SK-N-SH (cell line): ENCODE measurements at regions of chr17 and their contacts with region 1.

Region 1: DNA sequence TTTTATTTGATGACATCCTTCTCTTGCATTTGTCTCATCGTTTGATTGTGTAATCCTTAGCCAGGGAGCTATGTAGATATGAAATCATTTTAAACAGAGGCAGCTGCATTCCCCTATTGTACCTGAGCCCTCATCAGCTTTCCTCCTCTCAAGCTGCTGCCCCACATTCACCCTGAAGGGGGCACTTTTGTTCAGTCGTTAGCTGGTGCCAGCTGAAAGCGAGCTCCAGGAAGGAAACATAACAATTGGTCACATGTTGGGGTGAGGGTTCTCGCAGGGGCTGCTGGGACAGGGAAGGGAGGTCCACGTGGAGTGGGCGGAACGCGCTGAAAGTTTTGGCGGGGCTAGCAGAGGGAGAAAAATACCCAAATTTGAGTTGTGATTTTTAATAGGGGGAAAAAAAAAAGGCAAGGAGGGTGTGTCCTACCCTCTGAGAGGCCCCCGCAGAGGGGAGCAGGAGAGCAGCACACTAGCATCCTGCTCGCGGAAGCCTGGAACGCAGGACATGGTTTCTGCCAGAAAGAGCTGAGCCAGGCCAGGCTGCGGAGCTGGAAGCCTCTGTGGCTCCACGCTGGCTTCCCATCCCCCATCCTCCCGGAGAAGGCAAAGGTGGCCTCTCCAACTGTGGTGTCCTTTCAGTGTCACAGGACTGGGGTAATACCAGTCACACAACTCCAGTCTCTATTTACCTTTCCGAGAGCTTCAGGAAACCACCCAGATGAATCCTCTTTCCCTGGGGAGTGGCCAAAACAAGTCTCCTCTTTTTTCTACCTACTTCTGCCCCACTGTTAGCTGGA is 8.5 kb upstream of the MSL1 start:
- DNase-seq: peak; percentile 90
- H3K4me3 ChIP-seq: peak overlapping the region; percentile 44 to 48
- H3K27ac ChIP-seq: peak overlapping the region; percentile 82 to 86
- H3K4me1 ChIP-seq: peaks cover 37 to 41% of the 10 kb centered on the region in 2 experiments
- H3K27me3 ChIP-seq: no peaks in the 10 kb centered on the region
- CTCF ChIP-seq: peak; percentile 84
- EP300 ChIP-seq: 0 out of 4 replicates have a peak, but pooled peaks of 1 of the 2 experiments have one; percentile 21
- RAD21 ChIP-seq: peak; percentile 88

Region 2: GRCh38 chr17:40026816-40027613 is 86.3 kb before region 1 on chr17:
- CTCF ChIA-PET with region 1: interaction called, 44 read pairs
- POLR2A ChIA-PET with region 1: no interaction called
- DNase-seq: peak; percentile 93
- H3K4me3 ChIP-seq: no peak overlapping the region
- H3K27ac ChIP-seq: no peak overlapping the region
- H3K4me1 ChIP-seq: no peaks in the 10 kb centered on the region; a peak in 1 of 4 replicates
- H3K27me3 ChIP-seq: no peaks in the 10 kb centered on the region
- CTCF ChIP-seq: peak; percentile 89
- EP300 ChIP-seq: no peak
- RAD21 ChIP-seq: peak; percentile 62

Region 3: DNA sequence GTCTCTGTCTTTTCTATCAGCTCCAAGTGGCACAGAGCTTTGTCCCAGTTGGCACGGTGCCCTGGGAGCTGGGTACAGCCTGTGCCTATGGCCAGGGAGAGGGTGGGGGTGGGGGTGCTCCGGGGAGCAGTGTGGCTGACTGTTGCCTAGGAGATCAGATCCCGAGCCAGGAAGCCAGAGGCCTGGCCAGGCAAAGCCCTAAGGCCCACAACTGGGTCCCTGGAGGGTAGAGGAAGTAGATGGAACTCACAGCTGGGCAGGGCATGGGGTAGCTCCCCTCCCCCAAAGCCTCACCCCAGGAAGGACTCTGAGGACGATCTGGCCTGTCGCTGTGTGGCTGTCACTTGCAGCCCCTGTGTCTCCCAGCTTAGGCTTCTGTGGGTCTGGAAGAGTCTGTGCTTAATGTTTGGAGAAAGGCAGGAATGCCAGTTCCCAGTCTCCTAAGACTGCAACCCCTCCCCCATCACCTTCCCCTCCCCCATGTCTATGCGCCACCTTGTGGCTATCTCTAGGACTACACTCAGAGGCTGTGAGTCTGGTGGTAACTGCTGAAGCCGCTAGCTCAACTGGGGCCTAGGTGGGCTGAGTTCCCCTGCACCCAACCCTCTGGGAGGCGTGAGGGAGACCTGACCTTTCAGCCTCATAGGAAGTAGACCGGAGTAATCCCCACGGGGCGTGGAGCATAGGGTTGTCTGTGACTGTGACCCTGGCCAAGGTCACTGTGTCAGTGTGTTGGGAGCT is 37.9 kb before region 1 on chr17:
- CTCF ChIA-PET with region 1: interaction called, 100 read pairs
- POLR2A ChIA-PET with region 1: interaction called, 4 read pairs
- DNase-seq: peak; percentile 83
- H3K4me3 ChIP-seq: no peak overlapping the region; a peak in 1 of 4 replicates
- H3K27ac ChIP-seq: peak overlapping the region; percentile 54 to 76; a peak in 3 of 4 replicates
- H3K4me1 ChIP-seq: peaks cover 32 to 59% of the 10 kb centered on the region in 2 experiments; a peak in 3 of 4 replicates
- H3K27me3 ChIP-seq: no peaks in the 10 kb centered on the region
- CTCF ChIP-seq: peak; percentile 88
- EP300 ChIP-seq: peak in 1 of 2 experiments; percentile 12; a peak in 1 of 4 replicates
- RAD21 ChIP-seq: peak; percentile 69

Region 4: GRCh38 chr17:40139566-40140058 is 26.3 kb after region 1 on chr17:
- CTCF ChIA-PET with region 1: interaction called, 8 read pairs
- POLR2A ChIA-PET with region 1: interaction called, 13 read pairs
- DNase-seq: no peak
- H3K4me3 ChIP-seq: peak overlapping the region; percentile 59 to 65
- H3K27ac ChIP-seq: peak overlapping the region; percentile 85 to 90
- H3K4me1 ChIP-seq: peaks cover 4% of the 10 kb centered on the region in 2 experiments; a peak in 2 of 4 replicates
- H3K27me3 ChIP-seq: no peaks in the 10 kb centered on the region
- CTCF ChIP-seq: no peak
- EP300 ChIP-seq: no peak
- RAD21 ChIP-seq: no peak

Region 5: GRCh38 chr17:40177275-40177874 is 64.1 kb after region 1 on chr17 and contains the start of gene RAPGEFL1:
- CTCF ChIA-PET with region 1: interaction called, 43 read pairs
- POLR2A ChIA-PET with region 1: no interaction called
- DNase-seq: peak; percentile 95
- H3K4me3 ChIP-seq: peak within 1 kb of the TSS; percentile 44 to 52; a peak in 2 of 4 replicates
- H3K27ac ChIP-seq: peak within 1 kb of the TSS in 1 of 2 experiments; percentile 48; a peak in 1 of 4 replicates
- H3K4me1 ChIP-seq: peaks cover 6 to 32% of the 10 kb centered on the region in 2 experiments; a peak in 1 of 4 replicates
- H3K27me3 ChIP-seq: no peaks in the 10 kb centered on the region
- CTCF ChIP-seq: no peak
- EP300 ChIP-seq: no peak
- RAD21 ChIP-seq: no peak
- polyA plus RNA-seq, gene RAPGEFL1: 5.9 and 6.0 TPM in 2 replicates

Region 6: DNA sequence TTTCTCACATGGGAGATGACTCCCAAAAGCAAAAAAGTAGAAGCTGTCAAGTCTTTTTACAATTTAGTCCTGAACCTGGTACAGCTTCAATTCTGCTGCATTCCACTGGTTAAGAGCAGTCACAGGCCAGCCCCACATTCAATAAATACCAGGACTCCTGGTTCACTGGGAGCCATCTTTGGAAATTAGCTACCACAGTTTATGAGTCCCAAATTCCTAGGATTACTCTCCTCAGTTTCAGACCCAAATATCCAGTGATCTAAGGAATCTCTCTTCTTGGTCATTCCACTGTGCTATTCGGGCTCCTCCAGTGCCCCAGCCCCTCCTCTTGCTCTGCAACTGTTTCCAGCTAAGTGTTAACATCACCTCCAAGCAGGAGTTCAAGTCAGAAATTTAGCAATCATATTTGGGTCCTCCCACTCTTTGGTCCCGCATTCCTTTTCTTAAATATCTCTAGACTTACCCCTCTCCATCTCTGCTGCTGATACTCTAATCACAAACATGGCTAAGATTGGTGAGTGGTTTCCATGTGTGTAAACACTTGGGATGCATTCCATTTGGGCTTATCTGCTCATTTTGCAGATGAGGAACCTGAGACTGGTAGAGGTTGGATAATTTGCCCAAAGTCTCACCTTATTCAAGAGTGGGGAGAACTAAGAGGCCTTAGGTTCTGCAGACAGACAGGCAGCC is 96.2 kb after region 1 on chr17:
- CTCF ChIA-PET with region 1: no interaction called
- POLR2A ChIA-PET with region 1: no interaction called
- DNase-seq: no peak
- H3K4me3 ChIP-seq: no peak overlapping the region
- H3K27ac ChIP-seq: no peak overlapping the region; a peak in 1 of 4 replicates
- H3K4me1 ChIP-seq: peaks cover 0 to 8% of the 10 kb centered on the region in 2 experiments; a peak in 1 of 4 replicates
- H3K27me3 ChIP-seq: no peaks in the 10 kb centered on the region
- CTCF ChIP-seq: no peak
- EP300 ChIP-seq: no peak
- RAD21 ChIP-seq: no peak